SK-N-SH (cell line): ENCODE measurements at regions of chr19 and their contacts with region 1.

Region 1: GRCh38 chr19:47707135-47707925 is 5.9 kb upstream of the EHD2 start:
- DNase-seq: peak; percentile 84
- H3K4me3 ChIP-seq: no peak overlapping the region; a peak in 1 of 4 replicates
- H3K27ac ChIP-seq: no peak overlapping the region
- H3K4me1 ChIP-seq: no peaks in the 10 kb centered on the region
- H3K27me3 ChIP-seq: no peaks in the 10 kb centered on the region
- CTCF ChIP-seq: peak; percentile 75
- EP300 ChIP-seq: no peak
- RAD21 ChIP-seq: peak; percentile 78

Region 2: GRCh38 chr19:47447470-47448359 is 259.6 kb before region 1 on chr19:
- CTCF ChIA-PET with region 1: interaction called, 14 read pairs
- POLR2A ChIA-PET with region 1: no interaction called
- DNase-seq: peak; percentile 97
- H3K4me3 ChIP-seq: peak overlapping the region; percentile 41 to 46; a peak in 3 of 4 replicates
- H3K27ac ChIP-seq: peak overlapping the region in 1 of 2 experiments; percentile 67; a peak in 1 of 4 replicates
- H3K4me1 ChIP-seq: peaks cover 0 to 9% of the 10 kb centered on the region in 2 experiments; a peak in 2 of 4 replicates
- H3K27me3 ChIP-seq: no peaks in the 10 kb centered on the region; the same call in 1 of the 2 replicates
- CTCF ChIP-seq: no peak
- EP300 ChIP-seq: no peak
- RAD21 ChIP-seq: no peak

Region 3: DNA sequence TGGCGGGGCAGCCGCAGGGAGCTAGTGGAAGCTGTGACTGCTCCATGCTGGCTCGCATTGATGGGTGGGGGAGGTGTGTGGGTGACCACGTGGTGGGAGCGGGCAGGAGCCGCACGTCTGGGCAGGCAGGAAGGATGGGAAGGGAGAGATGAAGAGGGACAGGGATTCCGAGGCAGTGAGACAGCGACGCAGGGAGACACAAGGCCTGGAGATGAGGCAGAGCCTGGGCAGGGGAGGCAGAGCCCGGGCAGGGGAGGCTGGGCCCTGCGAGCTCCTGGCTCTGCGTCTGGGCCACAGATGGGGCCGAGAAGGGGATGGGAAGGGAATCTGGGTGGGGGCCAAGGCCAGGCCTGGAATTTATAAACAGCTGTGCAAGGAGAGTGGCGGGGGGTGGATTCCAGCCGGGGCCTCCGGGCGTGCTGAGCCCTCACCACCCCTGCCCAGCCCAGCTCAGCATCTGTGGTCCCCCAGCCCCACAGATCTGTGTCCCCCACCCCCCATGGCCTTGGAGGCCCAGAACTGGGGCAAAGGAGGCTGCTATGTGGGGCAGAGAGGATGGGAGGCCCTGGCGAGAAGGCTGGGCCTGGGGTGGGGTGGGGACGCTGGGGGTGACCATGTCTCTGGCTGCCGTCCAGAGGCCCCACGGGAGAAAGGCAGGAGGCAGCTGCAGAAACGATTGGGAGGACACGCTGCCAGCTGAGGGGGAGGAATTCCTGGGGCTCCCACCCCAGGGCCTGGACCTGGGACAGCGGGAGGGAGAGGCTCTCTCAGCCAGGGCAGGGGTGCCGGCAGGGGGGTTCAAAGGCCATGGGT is 11.9 kb after region 1 on chr19:
- CTCF ChIA-PET with region 1: interaction called, 46 read pairs
- POLR2A ChIA-PET with region 1: no interaction called
- DNase-seq: peak; percentile 95
- H3K4me3 ChIP-seq: peak overlapping the region in 1 of 2 experiments; percentile 40; a peak in 2 of 4 replicates
- H3K27ac ChIP-seq: peak overlapping the region; percentile 94 to 95
- H3K4me1 ChIP-seq: peaks cover 19 to 21% of the 10 kb centered on the region in 2 experiments; a peak in 3 of 4 replicates
- H3K27me3 ChIP-seq: no peaks in the 10 kb centered on the region
- CTCF ChIP-seq: no peak
- EP300 ChIP-seq: peak; percentile 57 to 79; a peak in 2 of 4 replicates
- RAD21 ChIP-seq: no peak